Prostate gland (tissue), 2 donors: ENCODE measurements at regions of chr1 and their contacts with region 1.

Region 1: GRCh38 chr1:48817505-48818114 is 40.9 kb upstream of the BEND5 start:
- DNase-seq: peak; percentile 55
- H3K4me3 ChIP-seq: no peak overlapping the region
- H3K27ac ChIP-seq: no peak overlapping the region
- H3K4me1 ChIP-seq: no peaks in the 10 kb centered on the region
- H3K27me3 ChIP-seq: no peaks in the 10 kb centered on the region
- CTCF ChIP-seq: peak; percentile 67 to 76 (median 72)
- POLR2A ChIP-seq: no peak

Region 2: GRCh38 chr1:48572646-48573261 is 244.9 kb before region 1 on chr1:
- intact Hi-C with region 1: loop called (anchors 5 kb)
- DNase-seq: no peak
- H3K4me3 ChIP-seq: no peak overlapping the region
- H3K27ac ChIP-seq: no peak overlapping the region
- H3K4me1 ChIP-seq: no peaks in the 10 kb centered on the region
- H3K27me3 ChIP-seq: no peaks in the 10 kb centered on the region
- CTCF ChIP-seq: peak in 3 of 4 experiments; percentile 10 to 56 (median 52)
- POLR2A ChIP-seq: no peak

Region 3: DNA sequence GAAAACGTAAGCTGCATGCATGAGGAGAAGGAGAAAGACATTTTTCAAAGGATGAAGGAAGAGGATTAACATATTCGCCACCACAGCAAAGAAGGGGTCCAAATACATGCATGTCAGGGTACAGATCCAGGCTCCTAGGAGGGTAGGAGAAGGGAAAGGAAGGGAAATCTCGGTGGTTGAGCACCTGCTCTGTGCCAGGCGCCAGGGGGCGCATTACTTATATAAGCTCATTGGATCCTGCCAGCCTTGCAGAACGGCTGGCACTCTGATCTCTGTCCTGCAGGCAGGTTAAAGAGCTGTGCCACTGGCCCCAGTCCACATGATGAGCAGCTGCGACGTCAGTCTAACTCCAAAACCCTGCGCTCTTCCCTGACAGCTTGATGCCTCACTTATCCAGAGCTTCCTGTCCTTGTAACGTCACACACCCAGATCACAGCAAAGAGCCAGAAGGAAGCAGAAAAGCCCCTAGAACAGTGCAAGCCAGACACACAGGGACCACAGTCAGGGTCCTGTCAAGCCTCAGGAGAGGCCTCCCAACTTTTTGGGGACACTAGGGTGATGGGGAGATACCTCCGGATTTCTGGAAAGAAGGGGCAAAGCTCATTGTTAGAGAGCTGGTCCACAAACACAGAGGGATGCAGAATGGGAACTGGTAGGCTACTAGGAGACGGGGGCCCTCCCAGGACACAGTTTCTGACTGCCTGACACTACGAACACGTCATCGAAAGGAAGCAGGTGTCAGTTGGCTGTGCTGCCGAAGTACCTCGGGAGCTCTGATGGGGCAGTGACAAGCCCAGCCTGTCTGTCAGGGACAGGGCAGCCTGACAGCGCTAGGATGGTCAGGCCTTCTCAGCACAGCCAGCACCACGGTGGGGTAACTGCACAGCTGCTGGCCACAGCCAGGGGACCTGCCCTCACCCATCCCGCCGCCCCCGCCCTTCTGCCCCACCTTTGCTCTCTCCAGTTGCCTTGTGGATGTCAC is 140.0 kb before region 1 on chr1:
- intact Hi-C with region 1: loop called (anchors 10 kb)
- DNase-seq: peak; percentile 71
- H3K4me3 ChIP-seq: no peak overlapping the region
- H3K27ac ChIP-seq: no peak overlapping the region
- H3K4me1 ChIP-seq: no peaks in the 10 kb centered on the region
- H3K27me3 ChIP-seq: no peaks in the 10 kb centered on the region
- CTCF ChIP-seq: peak in 3 of 4 experiments; percentile 48 to 79 (median 78)
- POLR2A ChIP-seq: no peak

Region 4: GRCh38 chr1:48741395-48741794 is 76.2 kb before region 1 on chr1:
- intact Hi-C with region 1: no loop called
- DNase-seq: peak; percentile 28
- H3K4me3 ChIP-seq: no peak overlapping the region
- H3K27ac ChIP-seq: peak overlapping the region in 1 of 2 donors; percentile 10
- H3K4me1 ChIP-seq: no peaks in the 10 kb centered on the region
- H3K27me3 ChIP-seq: no peaks in the 10 kb centered on the region
- CTCF ChIP-seq: no peak
- POLR2A ChIP-seq: no peak